ENCODE measurements at regions of chr3 and their contacts with region 1.

Region 1: GRCh38 chr3:50611464-50612233 is at the start of gene CISH:
- DNase-seq: peak; percentile 75 to 94 (median 90)
- ATAC-seq: peak; percentile 64
- H3K4me3 ChIP-seq: peak within 1 kb of the TSS; percentile 89 to 95
- H3K4me3 Mint-ChIP-seq: peak within 1 kb of the TSS; percentile 97
- H3K27ac ChIP-seq: peak within 1 kb of the TSS; percentile 57 to 87
- H3K27ac Mint-ChIP-seq: peak within 1 kb of the TSS; percentile 92
- H3K4me1 ChIP-seq: peaks cover 58% of the 10 kb centered on the region
- H3K4me1 Mint-ChIP-seq: peaks cover 67% of the 10 kb centered on the region
- H3K27me3 ChIP-seq: no peaks in the 10 kb centered on the region
- H3K27me3 Mint-ChIP-seq: no peaks in the 10 kb centered on the region
- CTCF ChIP-seq: no peak
- total RNA-seq, gene CISH: 4.7 to 5.6 TPM

Region 2: DNA sequence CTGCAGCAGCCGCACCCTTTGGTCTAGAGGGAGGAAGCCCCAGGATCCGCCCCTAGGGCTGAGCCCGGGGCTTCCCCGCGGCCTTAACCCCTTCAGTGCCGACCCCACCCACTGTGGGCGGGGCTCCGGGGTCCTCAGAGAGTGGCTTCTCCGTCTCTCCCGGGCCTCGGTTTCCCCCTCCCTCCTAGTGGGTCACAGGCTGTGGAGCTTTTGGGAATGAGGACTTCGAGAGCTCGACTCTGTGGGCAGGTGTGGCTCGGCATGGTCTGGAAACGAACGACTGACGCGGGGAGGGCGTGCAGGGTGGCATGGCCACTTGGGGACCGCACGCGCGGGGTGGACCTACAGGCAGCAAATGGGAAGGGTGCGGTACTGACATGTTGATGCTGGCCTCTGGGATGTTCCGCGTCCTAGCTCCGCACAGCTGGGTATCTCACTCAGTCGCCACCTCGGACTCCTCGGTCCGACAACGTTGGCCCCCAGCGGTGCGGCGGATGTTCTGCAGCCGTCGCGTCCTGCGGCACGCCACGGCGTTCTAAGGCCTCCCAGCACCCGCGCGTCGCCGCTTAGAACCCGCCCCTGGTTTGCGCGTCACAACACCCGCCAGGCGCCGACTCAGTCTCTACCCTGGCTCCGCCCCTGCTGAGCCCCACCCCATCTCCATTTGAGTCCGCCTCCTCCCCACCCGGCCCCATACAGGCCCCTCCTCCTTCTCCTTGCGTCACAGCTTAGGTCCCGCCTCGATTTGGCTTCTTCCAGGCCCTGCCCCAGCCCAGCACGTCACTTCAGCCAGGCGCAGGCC is 312.6 kb before region 1 on chr3 and contains the starts of genes HYAL3 and NAA80:
- CTCF ChIA-PET with region 1: no interaction called
- POLR2A ChIA-PET with region 1: interaction called, 3 read pairs
- intact Hi-C with region 1: loop called in 1 of 2 experiments (anchors 2 kb)
- DNase-seq: peak; percentile 85 to 100 (median 99)
- ATAC-seq: peak; percentile 89
- H3K4me3 ChIP-seq: peak within 1 kb of the TSS; percentile 97
- H3K4me3 Mint-ChIP-seq: peak within 1 kb of the TSS; percentile 99
- H3K27ac ChIP-seq: peak within 1 kb of the TSS; percentile 93 to 94
- H3K27ac Mint-ChIP-seq: peak within 1 kb of the TSS; percentile 99
- H3K4me1 ChIP-seq: peaks cover 25% of the 10 kb centered on the region
- H3K4me1 Mint-ChIP-seq: peaks cover 28% of the 10 kb centered on the region
- H3K27me3 ChIP-seq: no peaks in the 10 kb centered on the region
- H3K27me3 Mint-ChIP-seq: no peaks in the 10 kb centered on the region
- CTCF ChIP-seq: peak; percentile 53
- total RNA-seq, gene HYAL3: 2.1 to 3.2 TPM
- total RNA-seq, gene NAA80: 37.1 to 40.7 TPM

Region 3: DNA sequence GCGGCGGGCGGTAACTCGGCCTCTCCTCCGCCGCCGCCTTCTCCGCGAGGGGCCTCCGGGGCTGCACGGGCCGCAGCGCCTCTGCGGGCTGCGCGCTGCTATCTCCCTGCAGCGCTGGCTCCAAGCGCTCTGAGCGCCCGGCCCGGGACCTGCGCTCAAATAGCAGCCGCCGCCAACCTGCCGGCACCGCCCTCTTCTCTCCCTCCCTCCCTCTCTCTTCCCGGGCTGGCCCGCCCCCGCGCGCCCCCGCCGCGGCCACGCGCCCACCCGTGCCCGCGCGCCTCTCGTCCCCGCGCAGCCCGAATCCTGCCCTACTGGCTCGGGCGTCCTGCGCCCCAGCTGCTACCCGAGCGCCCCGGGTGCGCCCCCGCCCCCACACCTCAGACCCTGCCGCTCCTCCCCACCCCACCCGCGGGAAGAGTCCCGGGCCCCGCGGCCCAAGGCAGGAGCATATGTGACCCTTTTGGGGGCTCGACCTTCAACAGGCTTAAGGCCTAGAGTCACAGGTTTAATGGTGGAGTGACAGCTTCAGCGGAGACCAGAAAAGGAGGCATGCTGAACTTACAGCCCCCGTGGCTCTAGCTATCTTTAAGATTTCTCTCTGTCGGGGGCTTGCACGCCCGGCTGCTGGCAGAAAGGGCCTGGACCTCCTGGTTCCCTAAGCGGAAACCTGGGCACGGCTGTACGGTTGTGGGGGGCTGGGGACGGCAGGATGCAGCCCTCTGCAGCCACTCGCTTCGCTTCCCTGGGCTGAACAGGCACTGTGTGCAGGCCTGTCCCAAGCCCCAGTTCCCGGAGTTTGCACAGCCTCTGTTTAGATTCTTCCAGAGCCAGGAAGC is 107.9 kb before region 1 on chr3 and contains the start of gene CACNA2D2:
- CTCF ChIA-PET with region 1: interaction called, 4 read pairs
- POLR2A ChIA-PET with region 1: no interaction called
- intact Hi-C with region 1: loop called in 1 of 2 experiments (anchors 5 kb)
- DNase-seq: peak; percentile 45 to 88 (median 74)
- ATAC-seq: peak; percentile 93
- H3K4me3 ChIP-seq: peak within 1 kb of the TSS; percentile 49 to 52
- H3K4me3 Mint-ChIP-seq: peak within 1 kb of the TSS; percentile 79
- H3K27ac ChIP-seq: peak within 1 kb of the TSS in 1 of 2 experiments; percentile 7
- H3K27ac Mint-ChIP-seq: peak within 1 kb of the TSS; percentile 13
- H3K4me1 ChIP-seq: peaks cover 17% of the 10 kb centered on the region
- H3K4me1 Mint-ChIP-seq: peaks cover 10% of the 10 kb centered on the region
- H3K27me3 ChIP-seq: no peaks in the 10 kb centered on the region
- H3K27me3 Mint-ChIP-seq: peaks cover 5% of the 10 kb centered on the region
- CTCF ChIP-seq: no peak
- total RNA-seq, gene CACNA2D2: 7.2 to 8.7 TPM

Region 4: DNA sequence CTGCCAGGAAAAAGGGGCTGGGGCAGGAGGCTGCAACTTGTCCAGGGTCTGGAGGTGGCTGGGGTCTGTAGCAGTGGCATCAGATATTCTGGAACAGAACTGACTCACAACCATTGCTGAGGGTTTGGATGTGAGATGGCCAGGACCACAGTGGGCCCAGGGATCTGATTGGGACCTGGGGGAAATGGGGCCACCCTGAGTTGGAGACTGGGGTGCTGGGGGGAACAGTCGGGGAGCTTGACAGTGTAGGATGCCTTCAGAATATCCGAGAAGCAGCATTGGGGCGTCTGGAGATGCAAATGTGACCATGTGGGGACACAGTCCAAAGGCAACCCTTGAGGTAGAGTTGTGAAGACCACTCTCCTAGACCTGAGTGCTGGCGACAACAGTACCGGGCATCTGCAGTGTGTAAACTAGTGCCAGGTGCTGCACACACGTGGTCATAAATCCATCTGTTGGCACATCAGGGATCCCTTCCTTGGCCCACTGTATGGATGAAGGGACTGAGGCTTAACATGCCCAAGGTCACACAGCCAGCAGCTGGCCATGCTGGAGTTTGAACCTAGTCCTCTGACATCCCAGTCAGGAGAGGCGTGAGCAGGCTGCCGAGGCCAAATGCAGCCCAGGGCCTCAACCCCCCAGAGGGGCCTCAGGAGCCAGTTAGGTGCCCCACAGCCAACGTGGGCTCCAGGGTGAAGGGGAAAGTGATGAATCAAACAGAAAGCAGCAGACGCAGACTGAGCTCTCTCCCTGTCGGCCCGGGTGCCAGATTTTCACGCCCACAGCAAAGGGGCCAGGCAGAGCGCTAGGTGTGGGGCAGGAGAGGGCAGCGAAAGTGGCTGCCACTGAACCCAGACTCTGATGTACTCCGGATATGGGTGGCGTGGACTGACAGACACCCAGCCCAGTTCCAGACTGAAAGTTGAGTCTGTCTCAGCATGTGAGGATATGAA is 23.6 kb before region 1 on chr3:
- CTCF ChIA-PET with region 1: interaction called, 968 read pairs
- POLR2A ChIA-PET with region 1: interaction called, 110 read pairs
- intact Hi-C with region 1: loop called (anchors 1 kb)
- DNase-seq: peak in 7 of 9 experiments; percentile 27 to 84 (median 58)
- ATAC-seq: peak; percentile 67
- H3K4me3 ChIP-seq: no peak overlapping the region
- H3K4me3 Mint-ChIP-seq: peak overlapping the region; percentile 33
- H3K27ac ChIP-seq: peak overlapping the region in 1 of 2 experiments; percentile 79
- H3K27ac Mint-ChIP-seq: peak overlapping the region; percentile 88
- H3K4me1 ChIP-seq: peaks cover 55% of the 10 kb centered on the region
- H3K4me1 Mint-ChIP-seq: peaks cover 54% of the 10 kb centered on the region
- H3K27me3 ChIP-seq: no peaks in the 10 kb centered on the region
- H3K27me3 Mint-ChIP-seq: no peaks in the 10 kb centered on the region
- CTCF ChIP-seq: no peak

Region 5: GRCh38 chr3:50674349-50675178 is 62.9 kb after region 1 on chr3 and contains the start of gene DOCK3:
- CTCF ChIA-PET with region 1: interaction called, 7 read pairs
- POLR2A ChIA-PET with region 1: no interaction called
- intact Hi-C with region 1: loop called (anchors 1 to 2 kb)
- DNase-seq: peak; percentile 29 to 87 (median 60)
- ATAC-seq: peak; percentile 86
- H3K4me3 ChIP-seq: peak within 1 kb of the TSS; percentile 54 to 61
- H3K4me3 Mint-ChIP-seq: peak within 1 kb of the TSS; percentile 81
- H3K27ac ChIP-seq: no peak within 1 kb of the TSS
- H3K27ac Mint-ChIP-seq: no peak within 1 kb of the TSS
- H3K4me1 ChIP-seq: peaks cover 14% of the 10 kb centered on the region
- H3K4me1 Mint-ChIP-seq: peaks cover 11% of the 10 kb centered on the region
- H3K27me3 ChIP-seq: peaks cover 0 to 5% of the 10 kb centered on the region in 2 experiments
- H3K27me3 Mint-ChIP-seq: peaks cover 19% of the 10 kb centered on the region
- CTCF ChIP-seq: no peak
- total RNA-seq, gene DOCK3: 2.8 to 3.0 TPM

Region 6: GRCh38 chr3:51311055-51311454 is 699.4 kb after region 1 on chr3:
- CTCF ChIA-PET with region 1: interaction called, 11 read pairs
- POLR2A ChIA-PET with region 1: no interaction called
- intact Hi-C with region 1: loop called (anchors 1 kb)
- DNase-seq: peak in 2 of 9 experiments; percentile 40 to 51
- ATAC-seq: peak; percentile 38
- H3K4me3 ChIP-seq: no peak overlapping the region
- H3K4me3 Mint-ChIP-seq: no peak overlapping the region
- H3K27ac ChIP-seq: no peak overlapping the region
- H3K27ac Mint-ChIP-seq: no peak overlapping the region
- H3K4me1 ChIP-seq: no peaks in the 10 kb centered on the region
- H3K4me1 Mint-ChIP-seq: peaks cover 3% of the 10 kb centered on the region
- H3K27me3 ChIP-seq: no peaks in the 10 kb centered on the region
- H3K27me3 Mint-ChIP-seq: no peaks in the 10 kb centered on the region
- CTCF ChIP-seq: peak; percentile 31

Region 7: GRCh38 chr3:51391075-51391567 is 779.5 kb after region 1 on chr3 and contains the start of gene RBM15B:
- CTCF ChIA-PET with region 1: interaction called, 31 read pairs
- POLR2A ChIA-PET with region 1: interaction called, 3 read pairs
- intact Hi-C with region 1: loop called (anchors 1 to 2 kb)
- DNase-seq: peak; percentile 94 to 98 (median 97)
- ATAC-seq: peak; percentile 89
- H3K4me3 ChIP-seq: peak within 1 kb of the TSS; percentile 55 to 61
- H3K4me3 Mint-ChIP-seq: peak within 1 kb of the TSS; percentile 82
- H3K27ac ChIP-seq: peak within 1 kb of the TSS; percentile 71 to 88
- H3K27ac Mint-ChIP-seq: peak within 1 kb of the TSS; percentile 94
- H3K4me1 ChIP-seq: peaks cover 50% of the 10 kb centered on the region
- H3K4me1 Mint-ChIP-seq: peaks cover 68% of the 10 kb centered on the region
- H3K27me3 ChIP-seq: no peaks in the 10 kb centered on the region
- H3K27me3 Mint-ChIP-seq: no peaks in the 10 kb centered on the region
- CTCF ChIP-seq: peak; percentile 70
- total RNA-seq, gene RBM15B: 29.5 to 29.8 TPM